OCI-LY7 (cell line): ENCODE measurements at regions of chr2 and their contacts with region 1.

Region 1: GRCh38 chr2:119338826-119339561 is 27.6 kb downstream of the C2orf76 start:
- DNase-seq: peak; percentile 66
- H3K4me3 ChIP-seq: peak overlapping the region; percentile 18
- H3K27ac ChIP-seq: peak overlapping the region; percentile 44
- H3K4me1 ChIP-seq: peaks cover 38% of the 10 kb centered on the region
- CTCF ChIP-seq: no peak

Region 2: GRCh38 chr2:119352357-119352756 is 13.4 kb after region 1 on chr2:
- CTCF ChIA-PET with region 1: interaction called, 4 read pairs
- POLR2A ChIA-PET with region 1: interaction called, 28 read pairs
- intact Hi-C with region 1: no loop called
- DNase-seq: peak; percentile 97
- H3K4me3 ChIP-seq: peak overlapping the region; percentile 32
- H3K27ac ChIP-seq: peak overlapping the region; percentile 96
- H3K4me1 ChIP-seq: peaks cover 71% of the 10 kb centered on the region
- CTCF ChIP-seq: no peak